H1 (cell line): ENCODE measurements at regions of chr14 and their contacts with region 1.

Region 1: DNA sequence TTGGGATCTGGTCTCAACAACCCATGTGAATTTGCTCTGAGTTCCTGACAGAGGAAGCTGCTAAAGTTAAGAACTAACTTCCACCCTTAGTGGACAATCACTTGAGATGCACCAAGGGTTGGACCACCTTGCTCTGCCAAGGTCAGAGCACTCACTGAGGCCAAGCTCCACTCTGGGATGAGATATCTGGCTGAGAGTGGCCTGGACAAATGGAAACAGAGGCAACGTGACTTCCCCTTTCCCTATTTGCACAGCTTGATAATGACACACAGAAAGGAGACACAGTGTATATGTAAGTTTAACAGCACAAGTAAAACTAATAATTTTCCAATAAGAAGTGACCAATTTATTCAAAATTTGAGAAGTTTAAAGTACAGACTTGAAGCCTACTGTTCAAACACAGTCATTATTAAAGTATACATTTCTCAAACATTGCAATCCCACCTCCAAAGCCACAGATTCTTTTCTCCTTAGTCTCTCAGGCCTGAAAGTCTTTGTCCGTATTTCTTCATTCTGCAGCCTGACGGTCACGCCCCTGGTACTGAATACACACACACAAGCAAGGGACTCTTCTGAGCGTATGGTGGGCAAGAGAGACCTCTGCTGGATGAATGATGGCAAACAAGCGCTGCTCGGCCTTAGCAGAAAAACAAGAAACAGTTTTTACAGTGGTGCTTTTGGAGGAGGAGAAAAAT is 28.6 kb downstream of the TMEM30B start:
- DNase-seq: peak; percentile 59 to 65
- H3K4me3 ChIP-seq: no peak overlapping the region
- H3K27ac ChIP-seq: no peak overlapping the region
- H3K4me1 ChIP-seq: peaks cover 0 to 3% (median 0%) of the 10 kb centered on the region in 4 experiments; a peak in 5 of 7 replicates
- H3K27me3 ChIP-seq: peaks cover 0 to 8% (median 6%) of the 10 kb centered on the region in 4 experiments; a peak in 3 of 7 replicates
- CTCF ChIP-seq: peak; percentile 69 to 91 (median 87)
- EP300 ChIP-seq: no peak
- POLR2A ChIP-seq: no peak
- RAD21 ChIP-seq: peak; percentile 99

Region 2: GRCh38 chr14:61238611-61239245 is 13.8 kb before region 1 on chr14:
- CTCF ChIA-PET with region 1: interaction called, 30 read pairs
- POLR2A ChIA-PET with region 1: interaction called, 5 read pairs
- DNase-seq: no peak
- H3K4me3 ChIP-seq: peak overlapping the region in 1 of 4 experiments; percentile 4; a peak in 1 of 8 replicates
- H3K27ac ChIP-seq: peak overlapping the region; percentile 36; the same call in 1 of the 2 replicates
- H3K4me1 ChIP-seq: peaks cover 2 to 13% (median 7%) of the 10 kb centered on the region in 4 experiments; a peak in 5 of 7 replicates
- H3K27me3 ChIP-seq: no peaks in the 10 kb centered on the region
- CTCF ChIP-seq: no peak
- EP300 ChIP-seq: no peak
- POLR2A ChIP-seq: no peak
- RAD21 ChIP-seq: no peak